Ovary (tissue), 10 donors: ENCODE measurements at regions of chr11 and their contacts with region 1.

Region 1: DNA sequence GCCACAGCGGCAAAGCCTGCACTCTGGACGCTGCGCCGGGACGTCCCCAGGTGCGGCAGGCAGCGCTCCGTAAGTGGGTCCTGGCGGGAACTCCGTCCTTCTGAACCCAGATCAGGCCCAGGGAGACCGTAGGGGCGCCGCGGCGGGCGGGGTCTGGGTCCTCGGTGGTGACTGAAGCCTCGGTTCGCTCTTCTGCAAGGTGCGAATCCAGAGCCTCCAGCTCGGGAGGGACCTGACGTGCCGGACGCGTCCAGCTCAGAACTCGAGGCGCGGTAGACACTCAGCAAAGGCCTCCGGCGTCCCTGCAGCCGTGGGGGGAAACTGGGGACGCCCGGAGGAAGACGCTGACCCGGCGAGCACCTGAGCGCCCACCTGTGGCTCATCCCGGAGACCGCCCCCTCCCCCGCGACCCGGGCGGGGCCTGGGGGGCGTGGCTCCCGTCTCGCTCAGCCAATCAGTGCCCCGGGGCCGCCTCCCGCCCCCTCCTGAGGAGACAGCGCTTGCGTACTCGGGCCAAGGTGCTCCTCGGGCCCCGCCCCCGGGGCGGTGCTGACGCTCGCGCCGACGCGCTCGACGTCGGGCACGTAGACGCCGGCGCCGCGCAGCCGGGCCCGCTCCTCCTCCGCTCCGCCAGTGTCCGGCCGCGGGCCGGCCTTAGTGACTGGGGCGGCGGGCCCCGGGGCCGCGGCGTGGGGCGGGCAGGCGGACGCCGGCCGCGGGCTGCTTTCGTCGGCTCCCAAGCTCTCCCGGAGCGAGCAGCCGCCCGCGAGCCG is at the start of gene PPFIA1:
- DNase-seq: peak; percentile 94 to 97 (median 96)
- H3K4me3 ChIP-seq: peak within 1 kb of the TSS; percentile 64
- H3K27ac ChIP-seq: peak within 1 kb of the TSS; percentile 61 to 74
- H3K4me1 ChIP-seq: peaks cover 5% of the 10 kb centered on the region
- H3K27me3 ChIP-seq: no peaks in the 10 kb centered on the region
- CTCF ChIP-seq: no peak
- EP300 ChIP-seq: peak; percentile 63
- POLR2A ChIP-seq: peak; percentile 85
- total RNA-seq, gene PPFIA1: 25.9 to 60.3 (median 46.4) TPM

Region 2: DNA sequence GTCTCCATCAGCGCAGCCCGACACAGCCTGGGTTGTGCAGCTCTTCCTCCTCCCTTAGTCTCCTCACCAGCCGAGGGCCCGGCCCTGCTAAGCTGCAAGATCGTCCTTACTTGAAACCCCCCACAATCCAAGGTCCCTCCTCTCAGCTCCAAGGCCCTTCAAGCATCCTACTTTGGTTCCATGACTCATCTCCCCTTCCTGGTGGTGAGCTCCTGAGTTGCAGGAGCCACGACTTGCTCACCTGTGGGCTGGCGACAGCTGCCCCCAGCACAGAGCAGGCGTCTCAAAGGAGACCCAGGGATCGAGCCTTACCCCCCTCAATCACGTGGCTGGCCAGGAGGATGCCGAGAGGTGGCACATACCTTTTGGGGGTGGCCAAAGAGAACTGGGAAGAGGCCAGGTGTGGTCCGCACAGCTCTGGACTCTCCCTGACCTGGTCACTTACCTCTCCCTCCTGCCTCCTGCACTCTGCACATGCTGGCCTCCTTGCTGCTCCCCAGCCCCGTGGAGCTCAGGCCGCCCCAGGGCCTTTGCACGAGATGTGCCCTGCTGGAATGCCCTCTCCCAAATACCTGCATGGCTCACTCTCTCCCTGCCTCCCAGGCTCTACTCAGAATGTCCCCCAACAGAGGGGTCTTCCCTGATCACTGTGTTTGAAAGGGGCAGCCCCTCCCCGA is 102.4 kb before region 1 on chr11:
- intact Hi-C with region 1: no loop called
- DNase-seq: no peak
- H3K4me3 ChIP-seq: no peak overlapping the region
- H3K27ac ChIP-seq: no peak overlapping the region
- H3K4me1 ChIP-seq: no peaks in the 10 kb centered on the region
- H3K27me3 ChIP-seq: no peaks in the 10 kb centered on the region
- CTCF ChIP-seq: no peak
- EP300 ChIP-seq: no peak
- POLR2A ChIP-seq: no peak

Region 3: DNA sequence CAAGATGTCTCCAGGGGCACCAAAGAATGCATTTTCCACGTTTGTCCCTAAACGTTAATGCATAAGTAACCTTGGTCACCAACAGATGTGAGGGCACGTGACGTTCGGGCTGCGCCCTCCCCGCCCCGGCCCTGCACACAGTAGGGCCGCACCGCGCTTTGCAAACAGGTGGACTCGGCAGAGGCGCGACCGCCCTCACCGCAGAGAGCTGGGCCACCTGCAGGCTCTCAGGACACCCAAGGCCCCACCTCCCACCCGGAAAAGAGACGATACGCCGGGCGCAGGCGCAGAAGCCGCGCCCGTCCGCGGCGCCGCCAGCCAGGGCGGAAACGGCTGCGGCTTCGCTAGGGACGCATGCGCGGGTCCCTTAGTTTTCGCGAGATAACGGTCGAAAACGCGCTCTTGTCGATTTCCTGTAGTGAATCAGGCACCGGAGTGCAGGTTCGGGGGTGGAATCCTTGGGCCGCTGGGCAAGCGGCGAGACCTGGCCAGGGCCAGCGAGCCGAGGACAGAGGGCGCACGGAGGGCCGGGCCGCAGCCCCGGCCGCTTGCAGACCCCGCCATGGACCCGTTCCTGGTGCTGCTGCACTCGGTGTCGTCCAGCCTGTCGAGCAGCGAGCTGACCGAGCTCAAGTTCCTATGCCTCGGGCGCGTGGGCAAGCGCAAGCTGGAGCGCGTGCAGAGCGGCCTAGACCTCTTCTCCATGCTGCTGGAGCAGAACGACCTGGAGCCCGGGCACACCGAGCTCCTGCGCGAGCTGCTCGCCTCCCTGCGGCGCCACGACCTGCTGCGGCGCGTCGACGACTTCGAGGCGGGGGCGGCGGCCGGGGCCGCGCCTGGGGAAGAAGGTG is 67.2 kb before region 1 on chr11 and contains the start of gene FADD:
- intact Hi-C with region 1: loop called in 1 of 4 experiments (anchors 10 kb)
- DNase-seq: peak; percentile 88 to 93 (median 91)
- H3K4me3 ChIP-seq: peak within 1 kb of the TSS; percentile 69
- H3K27ac ChIP-seq: peak within 1 kb of the TSS; percentile 31 to 52
- H3K4me1 ChIP-seq: peaks cover 6% of the 10 kb centered on the region
- H3K27me3 ChIP-seq: no peaks in the 10 kb centered on the region
- CTCF ChIP-seq: no peak
- EP300 ChIP-seq: no peak
- POLR2A ChIP-seq: no peak
- total RNA-seq, gene FADD: 13.1 to 22.3 (median 17.9) TPM

Region 4: GRCh38 chr11:70226782-70227369 is 43.4 kb before region 1 on chr11:
- intact Hi-C with region 1: no loop called
- DNase-seq: no peak
- H3K4me3 ChIP-seq: no peak overlapping the region
- H3K27ac ChIP-seq: no peak overlapping the region
- H3K4me1 ChIP-seq: no peaks in the 10 kb centered on the region
- H3K27me3 ChIP-seq: no peaks in the 10 kb centered on the region
- CTCF ChIP-seq: no peak
- EP300 ChIP-seq: no peak
- POLR2A ChIP-seq: no peak

Region 5: DNA sequence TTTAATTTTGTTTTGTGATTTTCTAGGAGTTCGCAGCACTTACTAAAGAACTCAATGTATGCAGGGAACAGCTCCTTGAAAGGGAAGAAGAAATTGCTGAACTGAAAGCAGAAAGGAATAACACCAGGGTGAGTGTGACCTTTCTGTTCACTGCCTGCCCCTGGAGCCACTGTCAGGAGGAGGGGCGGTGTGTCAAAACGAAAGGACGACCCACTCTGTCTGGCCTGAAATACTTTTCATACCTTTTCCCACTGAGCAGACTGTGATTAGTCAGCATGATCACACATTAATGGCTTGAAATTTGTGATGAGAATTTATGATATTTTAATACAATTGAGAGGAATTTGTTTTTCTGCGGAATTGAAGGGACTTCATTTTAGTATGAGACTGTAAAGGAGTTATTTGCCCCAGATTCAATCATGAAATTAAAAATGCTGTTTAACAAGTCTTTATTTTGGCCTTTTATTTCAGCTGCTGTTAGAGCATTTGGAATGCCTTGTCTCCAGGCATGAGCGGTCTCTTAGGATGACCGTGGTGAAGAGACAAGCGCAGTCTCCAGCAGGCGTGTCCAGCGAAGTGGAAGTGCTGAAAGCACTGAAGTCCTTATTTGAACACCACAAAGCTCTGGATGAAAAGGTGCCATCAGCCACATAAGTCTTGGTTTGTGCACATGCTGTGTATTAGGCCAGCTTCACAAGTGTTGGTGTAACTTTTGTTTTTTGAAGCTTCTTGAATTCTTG is 54.3 kb after region 1 on chr11:
- intact Hi-C with region 1: loop called in 1 of 4 experiments (anchors 5 kb)
- DNase-seq: no peak
- H3K4me3 ChIP-seq: no peak overlapping the region
- H3K27ac ChIP-seq: no peak overlapping the region
- H3K4me1 ChIP-seq: peaks cover 3% of the 10 kb centered on the region
- H3K27me3 ChIP-seq: no peaks in the 10 kb centered on the region
- CTCF ChIP-seq: no peak
- EP300 ChIP-seq: no peak
- POLR2A ChIP-seq: no peak

Region 6: GRCh38 chr11:70397983-70398833 is 127.9 kb after region 1 on chr11 and contains the start of gene CTTN:
- intact Hi-C with region 1: loop called in 1 of 4 experiments (anchors 5 kb)
- DNase-seq: peak; percentile 88 to 95 (median 93)
- H3K4me3 ChIP-seq: peak within 1 kb of the TSS; percentile 84
- H3K27ac ChIP-seq: peak within 1 kb of the TSS; percentile 73 to 79
- H3K4me1 ChIP-seq: peaks cover 11% of the 10 kb centered on the region
- H3K27me3 ChIP-seq: no peaks in the 10 kb centered on the region
- CTCF ChIP-seq: no peak
- EP300 ChIP-seq: no peak
- POLR2A ChIP-seq: peak; percentile 68
- total RNA-seq, gene CTTN: 197 to 321 (median 207) TPM

Region 7: DNA sequence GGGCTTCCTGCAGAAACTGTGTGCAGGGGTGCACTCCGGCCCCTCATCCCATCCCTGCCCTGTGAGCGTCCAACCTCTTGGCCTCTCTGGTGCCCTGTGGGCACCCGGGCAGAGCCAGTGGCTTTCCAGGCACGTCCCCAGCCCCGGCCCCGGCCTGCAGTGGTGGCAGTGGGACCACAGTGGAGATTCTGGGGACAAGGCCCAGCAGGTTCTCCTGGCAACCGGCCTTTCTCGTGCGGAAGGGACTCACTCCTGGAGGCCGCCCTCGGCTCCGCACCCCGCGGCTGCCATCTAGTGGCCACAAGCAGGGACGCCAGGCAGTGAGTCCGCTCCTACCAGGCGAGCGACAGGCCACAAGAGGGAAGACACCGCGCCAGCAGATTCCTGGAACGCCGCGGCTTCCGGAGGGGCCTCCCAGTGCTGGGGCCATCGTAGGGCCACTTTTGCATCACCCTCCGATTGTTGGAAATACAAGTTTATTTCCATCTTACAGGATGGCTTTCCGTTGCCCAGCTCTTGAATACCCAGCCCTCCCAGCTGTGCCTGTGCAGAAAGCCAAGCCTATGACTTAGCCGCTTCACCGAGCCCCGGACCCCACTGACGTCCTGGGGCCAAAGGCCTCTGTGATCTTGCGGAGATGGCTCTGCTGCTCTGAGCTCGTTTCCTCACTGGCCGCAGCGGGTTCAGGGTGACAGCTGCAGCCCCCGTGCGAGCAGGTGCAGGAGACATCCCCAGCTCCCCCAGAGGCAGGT is 485.3 kb after region 1 on chr11:
- intact Hi-C with region 1: no loop called
- DNase-seq: peak in 4 of 5 donors; percentile 23 to 73 (median 52)
- H3K4me3 ChIP-seq: no peak overlapping the region
- H3K27ac ChIP-seq: no peak overlapping the region
- H3K4me1 ChIP-seq: no peaks in the 10 kb centered on the region
- H3K27me3 ChIP-seq: no peaks in the 10 kb centered on the region
- CTCF ChIP-seq: peak; percentile 15 to 71 (median 23)
- EP300 ChIP-seq: no peak
- POLR2A ChIP-seq: no peak